ENCODE measurements at regions of chr12 and their contacts with region 1.

Region 1: GRCh38 chr12:52884526-52885293 is 20.2 kb downstream of the KRT8 start:
- DNase-seq: no peak
- ATAC-seq: peak; percentile 86
- H3K4me3 ChIP-seq: no peak overlapping the region
- H3K27ac ChIP-seq: peak overlapping the region; percentile 83
- H3K4me1 ChIP-seq: peaks cover 17% of the 10 kb centered on the region
- H3K27me3 ChIP-seq: no peaks in the 10 kb centered on the region
- CTCF ChIP-seq: peak; percentile 94

Region 2: GRCh38 chr12:52698651-52699340 is 185.9 kb before region 1 on chr12:
- CTCF ChIA-PET with region 1: no interaction called
- POLR2A ChIA-PET with region 1: no interaction called
- in situ Hi-C with region 1: no loop called
- intact Hi-C with region 1: no loop called
- DNase-seq: no peak
- ATAC-seq: no peak
- H3K4me3 ChIP-seq: no peak overlapping the region
- H3K27ac ChIP-seq: no peak overlapping the region
- H3K4me1 ChIP-seq: no peaks in the 10 kb centered on the region
- H3K27me3 ChIP-seq: peaks cover 13% of the 10 kb centered on the region
- CTCF ChIP-seq: no peak

Region 3: DNA sequence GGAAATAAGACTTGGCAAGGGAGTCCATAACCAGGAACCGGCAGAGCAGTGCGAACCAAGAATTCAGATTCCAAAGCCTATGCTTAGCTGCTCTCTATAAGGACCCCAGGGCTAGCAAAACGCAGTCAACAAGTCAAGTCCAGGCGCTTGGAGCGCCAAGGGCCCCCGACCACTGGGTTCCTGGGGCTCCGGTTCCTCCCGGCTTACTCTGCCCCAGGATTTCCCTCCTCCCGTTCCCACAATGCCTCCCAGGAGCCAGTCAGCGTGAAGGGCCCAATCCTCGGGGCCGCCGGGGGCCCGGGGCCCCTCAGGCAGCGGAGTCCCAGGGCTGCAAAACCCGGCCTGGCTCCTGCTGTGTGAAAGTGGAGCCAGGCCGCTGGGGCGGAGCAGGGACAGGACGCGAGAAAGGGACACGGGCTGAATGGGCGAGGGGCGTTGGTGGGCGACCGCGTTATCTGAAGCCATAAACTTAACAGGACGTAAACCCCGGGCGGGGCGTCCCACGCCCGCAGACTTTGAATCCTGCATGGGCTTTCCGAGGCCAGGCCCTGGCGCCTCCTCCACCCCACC is 18.7 kb after region 1 on chr12:
- CTCF ChIA-PET with region 1: interaction called, 12 read pairs
- POLR2A ChIA-PET with region 1: interaction called, 4 read pairs
- in situ Hi-C with region 1: no loop called
- intact Hi-C with region 1: no loop called
- DNase-seq: no peak
- ATAC-seq: peak; percentile 44
- H3K4me3 ChIP-seq: peak overlapping the region; percentile 70 to 87
- H3K27ac ChIP-seq: peak overlapping the region; percentile 86
- H3K4me1 ChIP-seq: peaks cover 62% of the 10 kb centered on the region
- H3K27me3 ChIP-seq: no peaks in the 10 kb centered on the region
- CTCF ChIP-seq: no peak

Region 4: GRCh38 chr12:53047221-53048042 is 162.7 kb after region 1 on chr12:
- CTCF ChIA-PET with region 1: interaction called, 10 read pairs
- POLR2A ChIA-PET with region 1: interaction called, 7 read pairs
- in situ Hi-C with region 1: no loop called
- intact Hi-C with region 1: no loop called
- DNase-seq: no peak
- ATAC-seq: peak; percentile 64
- H3K4me3 ChIP-seq: peak overlapping the region; percentile 48 to 71
- H3K27ac ChIP-seq: peak overlapping the region; percentile 93
- H3K4me1 ChIP-seq: peaks cover 77% of the 10 kb centered on the region
- H3K27me3 ChIP-seq: no peaks in the 10 kb centered on the region
- CTCF ChIP-seq: peak; percentile 88

Measured in Panc1 (cell line).